Activated T-helper 1 cell treated with anti-CD3 and anti-CD28 coated beads, Interleukin-12 subunit alpha, Interleukin-12 subunit beta, Interleukin-2, Interleukin-4 antibody, amounts not matched to agents 30 ng/mL and 10 ng/mL and 1 ng/mL, durations not matched to agents 14 hours and 24 hours and 36 hours (primary cell): ENCODE measurements at regions of chr10 and their contacts with region 1.

Region 1: GRCh38 chr10:74589226-74589673 is 237.2 kb upstream of the KAT6B start:
- DNase-seq: peak; percentile 75
- H3K4me3 Mint-ChIP-seq: peak overlapping the region; percentile 54
- H3K27ac Mint-ChIP-seq: peak overlapping the region; percentile 91
- H3K4me1 Mint-ChIP-seq: peaks cover 74% of the 10 kb centered on the region
- H3K27me3 Mint-ChIP-seq: no peaks in the 10 kb centered on the region

Region 2: GRCh38 chr10:74058658-74059057 is 530.6 kb before region 1 on chr10:
- intact Hi-C with region 1: loop called (anchors 5 kb)
- DNase-seq: no peak
- H3K4me3 Mint-ChIP-seq: no peak overlapping the region
- H3K27ac Mint-ChIP-seq: peak overlapping the region; percentile 18
- H3K4me1 Mint-ChIP-seq: peaks cover 45% of the 10 kb centered on the region
- H3K27me3 Mint-ChIP-seq: peaks cover 4% of the 10 kb centered on the region

Region 3: DNA sequence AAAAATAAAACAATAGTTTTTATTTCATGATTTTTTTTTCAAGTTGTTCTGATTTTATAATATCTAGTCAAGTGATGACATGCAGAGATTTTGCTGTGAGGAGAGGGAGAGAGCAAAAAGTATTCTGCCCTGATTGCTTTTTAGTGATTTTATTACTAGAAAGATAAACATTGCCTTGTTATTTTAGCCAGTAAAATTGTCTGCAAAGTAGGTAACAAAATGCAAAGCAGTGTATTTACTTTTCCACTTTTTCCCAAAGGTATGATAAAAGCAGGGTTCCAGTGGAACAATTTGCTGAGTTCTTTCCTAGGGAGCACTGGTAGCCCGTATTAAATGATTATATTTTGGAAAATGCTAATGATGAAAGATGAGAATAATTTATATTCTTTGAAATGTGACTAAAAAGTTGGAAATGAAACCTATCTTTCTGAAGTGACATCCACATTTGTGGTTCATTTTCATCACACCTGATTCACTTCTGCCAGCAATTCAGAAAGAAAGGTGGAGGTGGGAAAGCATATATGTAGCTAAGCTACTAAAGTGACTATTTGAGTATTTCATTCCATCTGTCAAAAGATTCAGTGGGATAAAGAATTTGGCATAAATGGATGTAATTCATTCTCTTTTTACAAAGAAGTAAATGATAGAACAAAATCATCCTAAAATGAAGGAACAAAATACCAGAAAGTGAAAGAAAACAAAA is 138.0 kb before region 1 on chr10:
- intact Hi-C with region 1: loop called (anchors 1 kb)
- DNase-seq: no peak
- H3K4me3 Mint-ChIP-seq: no peak overlapping the region
- H3K27ac Mint-ChIP-seq: no peak overlapping the region
- H3K4me1 Mint-ChIP-seq: peaks cover 12% of the 10 kb centered on the region
- H3K27me3 Mint-ChIP-seq: no peaks in the 10 kb centered on the region

Region 4: GRCh38 chr10:74898201-74898976 is 309.1 kb after region 1 on chr10:
- intact Hi-C with region 1: loop called (anchors 1 kb)
- DNase-seq: peak; percentile 21
- H3K4me3 Mint-ChIP-seq: peak overlapping the region; percentile 20
- H3K27ac Mint-ChIP-seq: peak overlapping the region; percentile 73
- H3K4me1 Mint-ChIP-seq: peaks cover 57% of the 10 kb centered on the region
- H3K27me3 Mint-ChIP-seq: no peaks in the 10 kb centered on the region

Region 5: GRCh38 chr10:75042292-75042974 is 453.2 kb after region 1 on chr10:
- intact Hi-C with region 1: loop called (anchors 2 kb)
- DNase-seq: no peak
- H3K4me3 Mint-ChIP-seq: peak overlapping the region; percentile 19
- H3K27ac Mint-ChIP-seq: peak overlapping the region; percentile 91
- H3K4me1 Mint-ChIP-seq: peaks cover 41% of the 10 kb centered on the region
- H3K27me3 Mint-ChIP-seq: no peaks in the 10 kb centered on the region